ENCODE measurements at regions of chr20 and their contacts with region 1.

Region 1: DNA sequence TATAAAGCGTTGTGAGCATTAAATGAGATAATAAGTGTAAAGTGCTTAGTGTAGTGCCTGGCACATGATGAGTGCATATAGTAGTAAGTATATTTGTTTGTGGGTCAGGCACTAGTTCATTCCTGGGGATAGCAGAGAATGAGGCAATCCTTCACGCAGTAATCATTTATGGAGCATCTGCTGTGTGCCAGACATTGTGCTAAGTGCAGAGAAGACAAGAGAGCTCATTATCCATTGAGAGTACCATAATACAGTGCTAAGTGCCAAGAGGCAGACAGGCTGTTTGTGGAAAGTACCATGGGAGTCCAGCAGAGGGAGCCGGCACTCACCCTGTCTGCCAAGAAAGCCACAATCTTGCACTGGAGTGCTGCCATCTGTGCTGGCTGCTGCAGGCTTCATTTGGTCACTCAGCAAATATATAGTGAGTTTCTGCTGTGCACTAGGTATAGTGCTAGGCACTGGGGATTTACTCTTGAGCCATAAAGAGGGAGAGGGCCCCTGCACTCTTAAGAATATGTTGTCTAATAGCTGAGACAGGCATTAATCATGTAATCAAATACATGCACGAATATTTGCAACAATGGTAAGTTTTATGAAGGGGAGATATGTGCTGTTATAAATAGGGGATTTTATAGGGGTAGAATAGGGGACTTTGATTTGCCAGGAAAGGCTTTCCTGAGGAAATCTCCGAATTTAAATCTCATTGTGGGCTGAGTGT is 12.9 kb upstream of the MROH8 start:
- DNase-seq: peak; percentile 80
- ATAC-seq: peak; percentile 78
- H3K4me3 Mint-ChIP-seq: no peak overlapping the region
- H3K27ac Mint-ChIP-seq: peak overlapping the region; percentile 44
- H3K4me1 Mint-ChIP-seq: peaks cover 73% of the 10 kb centered on the region
- H3K27me3 Mint-ChIP-seq: no peaks in the 10 kb centered on the region

Region 2: GRCh38 chr20:37053230-37053950 is 138.9 kb before region 1 on chr20:
- CTCF ChIA-PET with region 1: no interaction called
- POLR2A ChIA-PET with region 1: no interaction called
- DNase-seq: no peak
- ATAC-seq: no peak
- H3K4me3 Mint-ChIP-seq: no peak overlapping the region
- H3K27ac Mint-ChIP-seq: peak overlapping the region; percentile 51
- H3K4me1 Mint-ChIP-seq: peaks cover 5% of the 10 kb centered on the region
- H3K27me3 Mint-ChIP-seq: no peaks in the 10 kb centered on the region

Region 3: DNA sequence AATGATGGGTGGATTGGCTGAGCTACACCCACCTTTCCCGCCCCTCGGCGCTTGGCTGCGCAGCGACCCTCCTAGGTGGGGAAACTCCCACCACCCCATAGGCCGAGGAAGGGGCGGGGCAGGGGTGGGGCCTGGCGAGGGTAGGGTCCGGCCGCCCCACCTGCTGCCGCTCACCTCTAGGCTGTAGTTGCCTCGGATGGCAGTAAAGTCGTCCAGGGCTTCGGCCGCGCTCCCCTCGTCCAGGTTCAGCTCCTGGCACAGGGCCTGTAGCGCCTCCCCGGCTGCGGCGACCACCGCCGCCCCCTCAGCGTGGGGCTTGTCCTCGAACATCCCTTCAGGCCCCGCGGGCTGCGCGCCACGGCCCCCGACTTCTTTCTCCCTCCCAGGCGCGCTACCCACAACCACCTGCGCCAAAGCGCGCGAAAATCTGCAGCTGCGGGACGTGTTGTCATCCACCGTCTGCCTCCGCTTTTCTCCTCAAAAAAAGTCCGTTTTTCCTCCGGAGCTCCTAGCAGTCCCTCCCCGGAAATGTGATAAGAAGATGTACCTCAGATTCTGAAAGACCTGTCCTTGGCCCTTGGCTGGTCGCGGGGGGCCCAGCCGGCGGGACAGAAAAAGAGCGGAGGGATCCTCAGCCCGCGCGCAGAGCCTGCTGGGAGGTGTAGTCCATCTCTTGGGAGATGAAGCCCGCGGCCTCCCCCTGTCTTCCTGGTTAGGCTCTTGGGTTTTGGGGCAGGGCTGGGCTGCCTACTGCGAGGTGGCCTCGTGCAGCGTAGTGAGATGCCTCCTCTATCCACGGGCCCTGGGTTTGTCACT is 96.5 kb before region 1 on chr20 and contains the start of gene RBL1:
- CTCF ChIA-PET with region 1: interaction called, 11 read pairs
- POLR2A ChIA-PET with region 1: no interaction called
- DNase-seq: peak; percentile 92
- ATAC-seq: peak; percentile 87
- H3K4me3 Mint-ChIP-seq: peak within 1 kb of the TSS; percentile 99
- H3K27ac Mint-ChIP-seq: peak within 1 kb of the TSS; percentile 100
- H3K4me1 Mint-ChIP-seq: peaks cover 44% of the 10 kb centered on the region
- H3K27me3 Mint-ChIP-seq: no peaks in the 10 kb centered on the region
- total RNA-seq, gene RBL1: 55.6 to 56.3 TPM

Region 4: GRCh38 chr20:37202267-37202943 is 10.1 kb after region 1 on chr20:
- CTCF ChIA-PET with region 1: interaction called, 45 read pairs
- POLR2A ChIA-PET with region 1: no interaction called
- DNase-seq: peak; percentile 30
- ATAC-seq: no peak
- H3K4me3 Mint-ChIP-seq: no peak overlapping the region
- H3K27ac Mint-ChIP-seq: no peak overlapping the region
- H3K4me1 Mint-ChIP-seq: no peaks in the 10 kb centered on the region
- H3K27me3 Mint-ChIP-seq: no peaks in the 10 kb centered on the region

Region 5: DNA sequence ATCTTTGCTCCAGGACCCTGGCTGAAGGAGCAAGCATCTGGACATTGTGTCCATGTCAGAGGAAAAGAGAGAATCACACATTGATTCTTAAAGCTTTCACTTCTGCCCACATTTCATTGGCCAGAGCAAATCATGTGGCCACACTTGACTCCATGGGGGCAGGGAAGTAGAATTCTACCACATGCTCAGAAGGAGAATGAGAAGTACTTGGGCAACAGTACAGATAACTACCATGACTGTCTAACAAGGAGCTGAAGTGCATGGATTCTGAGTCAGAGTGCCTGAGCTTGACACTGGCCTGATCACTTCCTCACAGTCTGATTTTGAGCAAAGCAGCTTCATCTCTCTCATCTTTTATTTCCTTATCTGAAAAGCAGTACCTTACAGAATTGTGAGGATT is 30.8 kb after region 1 on chr20:
- CTCF ChIA-PET with region 1: interaction called, 12 read pairs
- POLR2A ChIA-PET with region 1: no interaction called
- DNase-seq: no peak
- ATAC-seq: peak; percentile 33
- H3K4me3 Mint-ChIP-seq: no peak overlapping the region
- H3K27ac Mint-ChIP-seq: no peak overlapping the region
- H3K4me1 Mint-ChIP-seq: peaks cover 2% of the 10 kb centered on the region
- H3K27me3 Mint-ChIP-seq: no peaks in the 10 kb centered on the region

Region 6: GRCh38 chr20:37534401-37535157 is 342.3 kb after region 1 on chr20:
- CTCF ChIA-PET with region 1: interaction called, 51 read pairs
- POLR2A ChIA-PET with region 1: interaction called, 4 read pairs
- DNase-seq: peak; percentile 69
- ATAC-seq: peak; percentile 85
- H3K4me3 Mint-ChIP-seq: no peak overlapping the region
- H3K27ac Mint-ChIP-seq: no peak overlapping the region
- H3K4me1 Mint-ChIP-seq: peaks cover 15% of the 10 kb centered on the region
- H3K27me3 Mint-ChIP-seq: peaks cover 14% of the 10 kb centered on the region